GM12878 (cell line): ENCODE measurements at regions of chr2 and their contacts with region 1.

Region 1: GRCh38 chr2:171347591-171348032 is 86.2 kb downstream of the METTL8 start:
- DNase-seq: no peak
- ATAC-seq: peak; percentile 60
- H3K4me3 ChIP-seq: 0 out of 2 replicates have a peak overlapping the region, but pooled peaks have one; percentile 28
- H3K27ac ChIP-seq: peak overlapping the region; percentile 81
- H3K4me1 ChIP-seq: peaks cover 29% of the 10 kb centered on the region
- H3K27me3 ChIP-seq: no peaks in the 10 kb centered on the region
- CTCF ChIP-seq: no peak
- EP300 ChIP-seq: no peak
- POLR2A ChIP-seq: no peak
- RAD21 ChIP-seq: no peak

Region 2: GRCh38 chr2:171287611-171288010 is 60.0 kb before region 1 on chr2:
- CTCF ChIA-PET with region 1: no interaction called
- POLR2A ChIA-PET with region 1: no interaction called
- RAD21 ChIA-PET with region 1: no interaction called
- SMC1A ChIA-PET with region 1: no interaction called
- in situ Hi-C with region 1: no loop called
- intact Hi-C with region 1: no loop called
- DNase-seq: no peak
- ATAC-seq: no peak
- H3K4me3 ChIP-seq: no peak overlapping the region
- H3K27ac ChIP-seq: no peak overlapping the region
- H3K4me1 ChIP-seq: no peaks in the 10 kb centered on the region
- H3K27me3 ChIP-seq: no peaks in the 10 kb centered on the region
- CTCF ChIP-seq: no peak
- EP300 ChIP-seq: no peak
- POLR2A ChIP-seq: no peak
- RAD21 ChIP-seq: no peak

Region 3: DNA sequence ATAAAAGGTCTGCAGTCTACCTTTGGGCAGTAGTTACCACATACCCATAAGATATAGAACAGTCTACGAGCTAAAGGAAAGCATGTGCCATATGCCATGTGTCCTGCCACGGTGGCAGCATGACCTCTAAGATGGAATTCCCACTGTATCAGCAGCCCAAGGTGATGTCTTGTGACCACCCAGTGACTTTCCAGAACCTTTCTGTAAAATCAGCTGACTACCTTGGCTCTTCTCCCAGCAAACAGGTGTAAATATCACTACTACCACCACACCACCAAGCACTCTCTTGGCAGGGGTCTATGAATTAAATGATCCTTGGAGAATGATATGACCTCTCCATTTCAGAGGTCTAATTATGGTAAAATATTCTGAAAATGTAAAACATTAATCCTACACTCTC is 13.4 kb before region 1 on chr2:
- CTCF ChIA-PET with region 1: interaction called, 9 read pairs
- POLR2A ChIA-PET with region 1: interaction called, 11 read pairs
- RAD21 ChIA-PET with region 1: interaction called, 47 read pairs
- SMC1A ChIA-PET with region 1: interaction called, 56 read pairs
- in situ Hi-C with region 1: no loop called
- intact Hi-C with region 1: no loop called
- DNase-seq: no peak
- ATAC-seq: no peak
- H3K4me3 ChIP-seq: no peak overlapping the region
- H3K27ac ChIP-seq: peak overlapping the region; percentile 78
- H3K4me1 ChIP-seq: peaks cover 31% of the 10 kb centered on the region
- H3K27me3 ChIP-seq: no peaks in the 10 kb centered on the region
- CTCF ChIP-seq: no peak
- EP300 ChIP-seq: no peak
- POLR2A ChIP-seq: no peak
- RAD21 ChIP-seq: no peak

Region 4: DNA sequence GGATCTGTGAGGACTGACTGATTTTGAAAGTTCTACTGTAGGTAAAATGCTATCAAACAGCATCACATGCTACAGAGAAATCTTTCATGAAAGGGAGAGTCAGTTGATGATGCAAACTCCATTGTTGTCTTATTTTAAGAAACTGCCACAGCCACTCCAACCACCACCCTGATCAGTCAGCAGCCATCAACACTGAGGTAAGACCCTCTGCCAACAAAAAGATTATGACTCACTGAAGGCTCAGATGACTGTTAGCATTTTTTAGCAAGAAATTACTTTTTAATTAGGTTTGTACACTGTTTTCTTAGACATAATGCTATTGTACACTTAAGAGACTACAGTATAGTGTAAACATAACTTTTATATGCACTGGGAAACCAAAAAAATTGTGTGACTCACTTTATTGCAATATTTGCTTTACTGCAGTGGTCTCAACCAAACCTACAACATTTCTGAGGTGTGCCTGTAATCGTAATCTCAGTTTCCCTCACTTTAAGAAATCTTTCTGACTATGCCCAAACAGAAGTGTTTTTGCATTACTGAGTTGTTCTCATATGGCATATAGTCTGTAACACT is 43.4 kb after region 1 on chr2:
- CTCF ChIA-PET with region 1: interaction called, 8 read pairs
- POLR2A ChIA-PET with region 1: interaction called, 7 read pairs
- RAD21 ChIA-PET with region 1: interaction called, 20 read pairs
- SMC1A ChIA-PET with region 1: interaction called, 20 read pairs
- in situ Hi-C with region 1: no loop called
- intact Hi-C with region 1: no loop called
- DNase-seq: no peak
- ATAC-seq: peak; percentile 83
- H3K4me3 ChIP-seq: no peak overlapping the region
- H3K27ac ChIP-seq: peak overlapping the region; percentile 64
- H3K4me1 ChIP-seq: peaks cover 48% of the 10 kb centered on the region
- H3K27me3 ChIP-seq: no peaks in the 10 kb centered on the region
- CTCF ChIP-seq: no peak
- EP300 ChIP-seq: peak; percentile 58 to 64; a peak in 2 of 4 replicates
- POLR2A ChIP-seq: no peak
- RAD21 ChIP-seq: no peak

Region 5: GRCh38 chr2:171407030-171407675 is 59.5 kb after region 1 on chr2:
- CTCF ChIA-PET with region 1: interaction called, 25 read pairs
- POLR2A ChIA-PET with region 1: interaction called, 5 read pairs
- RAD21 ChIA-PET with region 1: interaction called, 19 read pairs
- SMC1A ChIA-PET with region 1: interaction called, 22 read pairs
- in situ Hi-C with region 1: no loop called
- intact Hi-C with region 1: no loop called
- DNase-seq: peak; percentile 71
- ATAC-seq: peak; percentile 75
- H3K4me3 ChIP-seq: 0 out of 2 replicates have a peak overlapping the region, but pooled peaks have one; percentile 14
- H3K27ac ChIP-seq: peak overlapping the region; percentile 93
- H3K4me1 ChIP-seq: peaks cover 64% of the 10 kb centered on the region
- H3K27me3 ChIP-seq: no peaks in the 10 kb centered on the region
- CTCF ChIP-seq: no peak
- EP300 ChIP-seq: peak; percentile 54 to 94; a peak in 3 of 4 replicates
- POLR2A ChIP-seq: no peak
- RAD21 ChIP-seq: 0 out of 2 replicates have a peak, but pooled peaks have one; percentile 14